ENCODE measurements at regions of chr1 and their contacts with region 1.

Region 1: GRCh38 chr1:90721210-90722194 is 4.4 kb upstream of the BARHL2 start:
- DNase-seq: peak; percentile 70
- H3K4me3 ChIP-seq: no peak overlapping the region
- H3K27ac ChIP-seq: no peak overlapping the region
- H3K4me1 ChIP-seq: no peaks in the 10 kb centered on the region
- CTCF ChIP-seq: peak; percentile 98

Region 2: DNA sequence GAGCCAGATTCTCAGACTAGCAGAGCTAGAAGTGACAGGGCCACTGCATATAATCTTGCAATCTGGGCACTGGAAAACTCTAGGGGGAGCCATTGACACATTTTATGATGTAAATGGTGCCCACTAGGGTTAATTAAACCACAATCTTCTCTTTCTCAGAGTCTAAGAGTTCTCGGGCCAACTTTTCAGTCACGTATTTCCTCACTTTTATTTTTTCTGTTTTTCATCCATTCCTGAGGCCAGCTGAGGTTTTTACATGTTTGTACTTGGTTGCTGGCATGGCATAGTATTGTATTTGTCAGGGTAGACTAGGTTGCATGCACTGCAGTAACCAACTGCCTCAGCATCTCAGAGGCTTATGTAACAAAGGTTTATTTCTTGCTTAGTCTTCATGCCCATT is 588.4 kb before region 1 on chr1:
- CTCF ChIA-PET with region 1: no interaction called
- POLR2A ChIA-PET with region 1: interaction called, 12 read pairs
- intact Hi-C with region 1: no loop called
- DNase-seq: peak; percentile 33
- H3K4me3 ChIP-seq: no peak overlapping the region
- H3K27ac ChIP-seq: no peak overlapping the region
- H3K4me1 ChIP-seq: no peaks in the 10 kb centered on the region
- CTCF ChIP-seq: peak; percentile 73

Region 3: DNA sequence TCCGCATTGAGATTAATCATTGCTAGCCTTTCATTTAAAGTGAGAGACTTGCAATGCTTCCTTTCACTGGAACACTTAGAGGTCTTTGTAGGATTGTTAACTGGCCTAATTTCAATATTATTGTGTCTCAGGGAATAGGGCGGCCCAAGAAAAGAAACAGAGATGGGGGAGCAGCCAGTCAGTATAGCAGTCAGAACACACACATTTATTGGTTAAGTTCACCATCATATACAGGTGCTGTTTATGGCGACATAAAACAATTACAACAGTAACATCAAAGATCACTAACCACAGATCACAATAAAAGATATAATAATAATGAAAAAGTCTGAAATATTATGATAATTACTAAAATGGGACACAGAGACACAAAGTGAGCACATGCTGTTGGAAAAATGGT is 33.8 kb before region 1 on chr1:
- CTCF ChIA-PET with region 1: no interaction called
- POLR2A ChIA-PET with region 1: no interaction called
- intact Hi-C with region 1: no loop called
- DNase-seq: no peak
- H3K4me3 ChIP-seq: no peak overlapping the region
- H3K27ac ChIP-seq: no peak overlapping the region
- H3K4me1 ChIP-seq: no peaks in the 10 kb centered on the region
- CTCF ChIP-seq: no peak

Region 4: GRCh38 chr1:90964444-90965035 is 243.0 kb after region 1 on chr1:
- CTCF ChIA-PET with region 1: no interaction called
- POLR2A ChIA-PET with region 1: no interaction called
- intact Hi-C with region 1: loop called (anchors 2 kb)
- DNase-seq: peak; percentile 11
- H3K4me3 ChIP-seq: no peak overlapping the region
- H3K27ac ChIP-seq: no peak overlapping the region
- H3K4me1 ChIP-seq: no peaks in the 10 kb centered on the region
- CTCF ChIP-seq: peak; percentile 87

Region 5: DNA sequence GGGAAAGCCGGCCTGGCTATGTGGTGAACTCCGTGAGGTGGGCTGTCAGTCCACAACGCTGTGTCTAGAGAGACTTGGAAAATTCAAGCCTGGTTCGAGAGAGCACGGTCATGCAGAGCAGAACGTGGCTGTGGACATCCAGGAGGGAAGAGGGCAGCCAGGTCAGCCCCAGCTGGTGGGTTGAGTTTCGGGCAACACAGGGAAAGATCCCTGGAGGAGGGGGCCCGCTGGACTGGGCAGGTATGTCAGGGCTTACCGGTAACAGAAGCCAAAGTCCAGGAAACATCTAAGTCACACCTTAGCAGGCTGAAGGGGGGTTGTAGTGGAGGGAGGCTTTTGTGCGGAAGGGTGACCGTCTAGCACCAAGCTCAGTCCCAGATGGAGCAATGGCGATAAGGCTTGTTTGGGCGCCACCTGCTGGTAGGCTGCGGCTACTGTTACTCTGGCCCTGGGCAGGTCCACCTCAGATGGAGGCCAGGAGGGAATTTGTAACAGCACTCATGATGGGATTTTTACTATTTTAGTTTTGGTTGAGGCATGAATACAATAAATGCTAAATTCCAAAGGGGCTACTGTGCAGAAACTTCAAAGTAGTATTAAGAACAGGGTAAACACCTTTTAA is 443.6 kb after region 1 on chr1:
- CTCF ChIA-PET with region 1: no interaction called
- POLR2A ChIA-PET with region 1: no interaction called
- intact Hi-C with region 1: loop called (anchors 1 kb)
- DNase-seq: peak; percentile 61
- H3K4me3 ChIP-seq: no peak overlapping the region
- H3K27ac ChIP-seq: no peak overlapping the region
- H3K4me1 ChIP-seq: no peaks in the 10 kb centered on the region
- CTCF ChIP-seq: peak; percentile 96